Activated CD4-positive, alpha-beta T cell treated with anti-CD3 and anti-CD28 coated beads, Interleukin-2, amount 10 ng/mL, durations not matched to agents 24 days and 14 days (primary cell): ENCODE measurements at regions of chr1 and their contacts with region 1.

Region 1: GRCh38 chr1:243850452-243851256 is 611 bp upstream of the AKT3 start:
- DNase-seq: peak; percentile 93
- H3K4me3 Mint-ChIP-seq: peak overlapping the region; percentile 85
- H3K27ac Mint-ChIP-seq: peak overlapping the region; percentile 90
- H3K4me1 Mint-ChIP-seq: peaks cover 19% of the 10 kb centered on the region
- H3K27me3 Mint-ChIP-seq: peaks cover 44% of the 10 kb centered on the region

Region 2: DNA sequence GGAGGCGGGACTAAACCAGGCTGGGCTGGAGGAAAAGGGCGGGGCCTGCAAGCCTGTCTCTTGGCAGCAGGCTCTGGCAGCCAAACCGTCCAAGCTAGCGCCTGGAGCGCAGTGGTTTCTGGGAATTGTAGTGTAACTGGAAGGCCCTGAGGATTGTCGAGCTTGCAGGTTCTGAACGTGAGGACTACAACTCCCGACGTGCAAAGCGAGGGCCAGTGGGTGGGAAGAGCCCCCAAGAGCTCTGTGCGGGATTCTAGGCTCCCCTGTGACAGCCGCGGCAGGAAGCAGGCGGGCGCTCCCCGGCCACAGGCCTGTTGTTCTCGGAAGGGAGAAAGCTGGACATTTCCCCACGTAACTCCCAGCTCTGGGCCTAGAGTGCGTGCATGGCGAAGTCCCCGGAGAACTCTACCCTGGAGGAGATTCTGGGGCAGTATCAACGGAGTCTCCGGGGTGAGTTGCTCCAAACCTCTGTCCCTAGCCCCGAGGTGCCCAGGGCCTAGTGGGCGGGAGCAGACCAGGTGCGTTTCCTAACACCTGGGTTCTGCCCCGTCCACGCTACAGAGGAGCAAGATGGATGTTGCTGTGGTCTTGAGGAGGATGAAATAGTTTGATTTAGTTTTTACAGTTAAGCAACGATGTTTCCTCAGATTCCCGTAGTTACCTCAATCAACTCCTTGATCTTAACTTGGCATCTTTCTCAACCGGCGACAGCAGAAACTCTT is 594.7 kb before region 1 on chr1 and contains the start of gene SDCCAG8:
- intact Hi-C with region 1: loop called (anchors 2 kb)
- DNase-seq: peak; percentile 98
- H3K4me3 Mint-ChIP-seq: peak within 1 kb of the TSS; percentile 89
- H3K27ac Mint-ChIP-seq: peak within 1 kb of the TSS; percentile 100
- H3K4me1 Mint-ChIP-seq: peaks cover 36% of the 10 kb centered on the region
- H3K27me3 Mint-ChIP-seq: no peaks in the 10 kb centered on the region
- total RNA-seq, gene SDCCAG8: 16.5 and 23.6 TPM in 2 replicates

Region 3: GRCh38 chr1:243806310-243806709 is 44.3 kb before region 1 on chr1:
- intact Hi-C with region 1: loop called (anchors 2 kb)
- DNase-seq: no peak
- H3K4me3 Mint-ChIP-seq: peak overlapping the region; percentile 8
- H3K27ac Mint-ChIP-seq: no peak overlapping the region
- H3K4me1 Mint-ChIP-seq: peaks cover 30% of the 10 kb centered on the region
- H3K27me3 Mint-ChIP-seq: no peaks in the 10 kb centered on the region

Region 4: GRCh38 chr1:243837907-243838535 is 12.6 kb before region 1 on chr1:
- intact Hi-C with region 1: loop called (anchors 1 kb)
- DNase-seq: peak; percentile 67
- H3K4me3 Mint-ChIP-seq: peak overlapping the region; percentile 32
- H3K27ac Mint-ChIP-seq: peak overlapping the region; percentile 83
- H3K4me1 Mint-ChIP-seq: peaks cover 22% of the 10 kb centered on the region
- H3K27me3 Mint-ChIP-seq: no peaks in the 10 kb centered on the region

Region 5: GRCh38 chr1:244047621-244048471 is 197.2 kb after region 1 on chr1:
- intact Hi-C with region 1: loop called (anchors 1 kb)
- DNase-seq: peak; percentile 97
- H3K4me3 Mint-ChIP-seq: peak overlapping the region; percentile 97
- H3K27ac Mint-ChIP-seq: peak overlapping the region; percentile 95
- H3K4me1 Mint-ChIP-seq: peaks cover 28% of the 10 kb centered on the region
- H3K27me3 Mint-ChIP-seq: peaks cover 47% of the 10 kb centered on the region

Region 6: DNA sequence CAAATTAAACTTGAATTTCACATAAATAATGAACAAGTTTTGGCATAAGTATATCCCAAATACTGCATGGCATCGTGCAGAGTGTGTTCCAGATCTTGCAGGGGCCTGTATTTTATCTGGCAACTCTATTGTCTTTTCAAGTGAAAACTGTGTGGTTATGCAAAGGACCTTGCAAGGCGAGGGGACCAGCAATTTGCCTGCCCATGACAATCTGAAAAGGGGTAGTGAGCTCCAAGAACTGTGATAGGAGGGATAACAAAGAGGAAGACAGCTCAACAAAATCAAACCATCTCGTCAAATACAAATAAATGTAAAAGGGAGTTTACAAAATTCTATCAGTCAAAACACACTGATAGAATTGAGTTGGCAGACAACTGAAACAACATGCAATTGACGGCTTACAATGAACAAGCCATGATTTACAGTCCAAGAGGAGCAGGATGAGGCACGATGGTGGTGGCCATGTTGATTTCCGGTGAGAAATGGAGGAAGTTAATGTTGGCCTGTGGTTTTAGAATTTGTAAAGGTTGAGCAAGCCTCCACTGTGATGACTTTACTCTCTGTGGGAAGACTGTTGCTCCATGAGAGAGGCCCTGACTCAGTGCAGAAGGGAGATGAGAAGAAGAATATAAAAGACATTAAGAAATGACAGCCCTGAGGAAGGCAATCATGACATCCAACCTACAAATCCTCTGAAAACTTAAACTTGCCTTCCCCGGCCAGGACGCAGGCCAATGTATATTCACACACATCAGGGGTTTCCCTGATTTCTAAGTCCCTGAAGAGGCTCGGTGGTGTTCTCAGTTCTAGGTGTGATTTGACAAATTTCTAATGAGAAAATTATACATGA is 468.9 kb after region 1 on chr1:
- intact Hi-C with region 1: loop called (anchors 2 kb)
- DNase-seq: peak; percentile 85
- H3K4me3 Mint-ChIP-seq: peak overlapping the region; percentile 60
- H3K27ac Mint-ChIP-seq: peak overlapping the region; percentile 84
- H3K4me1 Mint-ChIP-seq: peaks cover 43% of the 10 kb centered on the region
- H3K27me3 Mint-ChIP-seq: no peaks in the 10 kb centered on the region

Region 7: GRCh38 chr1:244451951-244452795 is 601.5 kb after region 1 on chr1:
- intact Hi-C with region 1: loop called (anchors 1 kb)
- DNase-seq: peak; percentile 100
- H3K4me3 Mint-ChIP-seq: peak overlapping the region; percentile 92
- H3K27ac Mint-ChIP-seq: peak overlapping the region; percentile 96
- H3K4me1 Mint-ChIP-seq: peaks cover 29% of the 10 kb centered on the region
- H3K27me3 Mint-ChIP-seq: no peaks in the 10 kb centered on the region